Heart left ventricle (tissue), 16 donors: ENCODE measurements at regions of chr13 and their contacts with region 1.

Region 1: GRCh38 chr13:48334534-48335127 is 31.1 kb downstream of the RB1 start:
- DNase-seq: no peak
- ATAC-seq: peak in 2 of 4 donors; percentile 53 to 69
- H3K4me3 ChIP-seq: no peak overlapping the region
- H3K27ac ChIP-seq: no peak overlapping the region
- H3K4me1 ChIP-seq: peaks cover 0 to 15% (median 6%) of the 10 kb centered on the region in 12 donors
- H3K27me3 ChIP-seq: no peaks in the 10 kb centered on the region
- CTCF ChIP-seq: peak; percentile 53 to 78 (median 72)
- POLR2A ChIP-seq: no peak

Region 2: GRCh38 chr13:48769107-48769704 is 434.6 kb after region 1 on chr13:
- intact Hi-C with region 1: loop called in 8 of 10 experiments (anchors 2 to 10 kb)
- DNase-seq: peak in 4 of 5 donors; percentile 71 to 86 (median 81)
- ATAC-seq: peak; percentile 57 to 96 (median 92)
- H3K4me3 ChIP-seq: no peak overlapping the region
- H3K27ac ChIP-seq: peak overlapping the region in 4 of 12 donors; percentile 27 to 44 (median 31)
- H3K4me1 ChIP-seq: peaks cover 0 to 14% (median 0%) of the 10 kb centered on the region in 12 donors
- H3K27me3 ChIP-seq: no peaks in the 10 kb centered on the region
- CTCF ChIP-seq: peak; percentile 94 to 100 (median 99)
- POLR2A ChIP-seq: no peak

Region 3: DNA sequence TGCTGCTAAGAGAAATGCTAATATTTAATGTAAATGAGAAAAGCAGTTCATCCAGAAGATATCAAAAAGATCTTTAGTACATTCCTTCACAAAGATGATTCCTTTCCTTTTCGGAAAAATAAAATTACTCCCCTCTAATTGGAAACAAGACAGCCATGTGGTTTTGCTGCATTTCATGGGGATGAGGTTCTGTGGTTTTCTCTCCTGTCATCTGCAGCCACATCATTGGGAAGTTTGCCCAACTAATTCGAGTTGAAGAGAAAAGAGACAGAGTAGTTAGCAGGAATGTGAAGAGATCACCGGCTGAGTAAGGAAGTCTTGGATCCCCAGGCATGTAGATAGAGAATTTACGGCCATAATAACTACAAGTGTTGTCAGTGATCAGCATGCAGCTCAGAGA is 441.2 kb after region 1 on chr13:
- intact Hi-C with region 1: loop called in 1 of 10 experiments (anchors 10 kb)
- DNase-seq: no peak
- ATAC-seq: no peak
- H3K4me3 ChIP-seq: no peak overlapping the region
- H3K27ac ChIP-seq: no peak overlapping the region
- H3K4me1 ChIP-seq: peaks cover 0 to 6% (median 0%) of the 10 kb centered on the region in 12 donors
- H3K27me3 ChIP-seq: no peaks in the 10 kb centered on the region
- CTCF ChIP-seq: no peak
- POLR2A ChIP-seq: no peak